ENCODE measurements at regions of chr1 and their contacts with region 1.

Region 1: DNA sequence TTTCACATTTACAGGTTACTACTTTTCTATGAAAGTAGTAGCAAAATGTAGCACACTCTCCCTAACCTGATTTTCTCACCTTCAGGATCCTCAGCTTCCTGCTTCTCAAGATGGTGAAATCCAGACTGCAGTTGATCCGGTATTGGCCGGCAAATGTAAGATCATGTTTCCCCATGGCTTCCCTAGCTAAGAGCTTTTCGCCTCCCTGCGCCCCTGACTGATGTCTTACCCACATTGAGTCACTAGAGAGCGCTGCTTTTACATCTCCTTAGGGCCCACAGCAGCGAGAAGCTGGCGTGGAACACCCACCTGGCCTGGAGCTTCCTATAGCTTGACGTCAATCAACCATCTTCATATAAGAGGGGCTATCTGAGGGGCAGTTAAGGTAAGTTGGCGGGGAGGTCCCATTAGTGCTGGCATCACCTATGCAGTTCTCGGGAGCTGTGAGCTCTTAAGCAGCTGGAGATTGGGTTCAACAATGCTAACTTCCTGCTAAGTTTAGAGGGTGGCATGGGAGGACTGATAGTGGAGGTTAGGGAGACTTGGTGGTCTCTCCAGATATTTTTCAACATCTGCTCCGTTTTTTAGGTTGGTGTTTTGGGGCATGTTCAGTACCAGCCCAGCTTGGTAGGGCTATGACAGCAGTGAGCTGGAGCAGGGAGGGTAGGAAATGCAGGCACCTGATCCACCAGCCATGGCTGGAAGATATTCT is 5.5 kb downstream of the PTPN7 start:
- DNase-seq: peak; percentile 74
- ATAC-seq: peak; percentile 54
- H3K4me3 Mint-ChIP-seq: peak overlapping the region; percentile 3
- H3K27ac Mint-ChIP-seq: peak overlapping the region; percentile 53
- H3K4me1 Mint-ChIP-seq: peaks cover 55% of the 10 kb centered on the region
- H3K27me3 Mint-ChIP-seq: no peaks in the 10 kb centered on the region

Region 2: GRCh38 chr1:202029171-202029665 is 125.7 kb before region 1 on chr1:
- CTCF ChIA-PET with region 1: no interaction called
- POLR2A ChIA-PET with region 1: no interaction called
- DNase-seq: no peak
- ATAC-seq: no peak
- H3K4me3 Mint-ChIP-seq: no peak overlapping the region
- H3K27ac Mint-ChIP-seq: no peak overlapping the region
- H3K4me1 Mint-ChIP-seq: no peaks in the 10 kb centered on the region
- H3K27me3 Mint-ChIP-seq: peaks cover 2% of the 10 kb centered on the region

Region 3: GRCh38 chr1:202135221-202135721 is 19.7 kb before region 1 on chr1:
- CTCF ChIA-PET with region 1: interaction called, 16 read pairs
- POLR2A ChIA-PET with region 1: interaction called, 4 read pairs
- DNase-seq: peak; percentile 67
- ATAC-seq: peak; percentile 77
- H3K4me3 Mint-ChIP-seq: no peak overlapping the region
- H3K27ac Mint-ChIP-seq: no peak overlapping the region
- H3K4me1 Mint-ChIP-seq: peaks cover 12% of the 10 kb centered on the region
- H3K27me3 Mint-ChIP-seq: no peaks in the 10 kb centered on the region

Region 4: DNA sequence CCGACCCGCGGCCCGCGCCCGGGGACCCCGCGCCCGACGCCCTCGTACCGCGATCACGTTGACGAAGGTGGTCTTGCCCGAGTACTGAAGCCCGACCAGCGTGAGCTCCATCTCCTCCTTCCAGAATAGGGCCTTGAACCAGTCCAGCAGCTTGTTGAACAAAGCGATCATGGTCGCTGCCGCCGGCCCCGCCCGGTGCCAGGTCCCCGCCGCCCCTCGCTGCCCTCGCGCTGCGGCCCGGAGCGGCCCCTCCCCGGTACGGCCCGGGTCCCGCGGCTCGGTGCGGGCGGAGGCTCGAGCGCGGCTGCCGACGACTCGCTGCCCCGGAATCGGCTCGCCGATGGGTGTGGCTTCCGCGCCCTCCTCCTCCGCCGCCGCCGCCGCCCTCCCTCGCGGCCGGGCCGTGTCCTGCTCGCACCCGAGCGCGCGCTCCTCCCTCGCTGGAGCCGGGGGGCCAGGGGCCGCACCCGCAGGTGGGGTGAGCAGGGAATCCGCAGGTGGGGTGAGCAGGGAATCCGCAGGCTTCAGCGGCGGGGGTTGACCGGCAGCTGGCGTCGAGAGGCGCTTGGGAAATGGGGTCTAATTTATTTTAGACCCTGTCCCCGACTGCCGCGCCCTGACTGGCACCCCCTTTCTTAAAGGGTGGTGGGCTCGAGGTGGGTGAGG is 10.4 kb before region 1 on chr1 and contains the start of gene ARL8A:
- CTCF ChIA-PET with region 1: interaction called, 39 read pairs
- POLR2A ChIA-PET with region 1: interaction called, 103 read pairs
- DNase-seq: peak; percentile 74
- ATAC-seq: peak; percentile 85
- H3K4me3 Mint-ChIP-seq: peak within 1 kb of the TSS; percentile 98
- H3K27ac Mint-ChIP-seq: peak within 1 kb of the TSS; percentile 94
- H3K4me1 Mint-ChIP-seq: peaks cover 28% of the 10 kb centered on the region
- H3K27me3 Mint-ChIP-seq: no peaks in the 10 kb centered on the region
- total RNA-seq, gene ARL8A: 39.7 to 42.0 TPM

Region 5: DNA sequence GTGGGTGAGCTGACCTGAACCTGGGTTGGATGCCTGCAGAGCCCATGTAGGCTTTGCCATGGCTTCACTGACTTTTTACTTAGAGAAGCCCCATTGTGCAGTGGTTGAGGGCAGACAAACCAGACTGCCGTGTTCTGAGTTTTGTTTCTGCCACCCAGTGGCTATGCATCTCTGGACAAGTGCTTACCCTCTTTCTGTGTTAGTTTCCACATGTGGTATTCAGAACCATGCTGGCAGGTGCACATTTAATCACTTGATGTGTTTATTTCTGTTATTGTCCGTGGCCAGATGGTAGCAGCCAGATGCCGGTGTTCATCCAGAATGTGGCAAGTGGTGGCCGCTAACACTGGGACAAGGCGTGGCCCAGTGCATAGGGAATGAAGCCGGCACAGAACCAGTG is 15.8 kb after region 1 on chr1:
- CTCF ChIA-PET with region 1: interaction called, 31 read pairs
- POLR2A ChIA-PET with region 1: interaction called, 15 read pairs
- DNase-seq: peak; percentile 43
- ATAC-seq: peak; percentile 49
- H3K4me3 Mint-ChIP-seq: no peak overlapping the region
- H3K27ac Mint-ChIP-seq: no peak overlapping the region
- H3K4me1 Mint-ChIP-seq: peaks cover 23% of the 10 kb centered on the region
- H3K27me3 Mint-ChIP-seq: no peaks in the 10 kb centered on the region

Region 6: GRCh38 chr1:202184750-202185460 is 30.0 kb after region 1 on chr1:
- CTCF ChIA-PET with region 1: interaction called, 29 read pairs
- POLR2A ChIA-PET with region 1: interaction called, 4 read pairs
- DNase-seq: peak; percentile 73
- ATAC-seq: peak; percentile 66
- H3K4me3 Mint-ChIP-seq: no peak overlapping the region
- H3K27ac Mint-ChIP-seq: no peak overlapping the region
- H3K4me1 Mint-ChIP-seq: peaks cover 25% of the 10 kb centered on the region
- H3K27me3 Mint-ChIP-seq: no peaks in the 10 kb centered on the region

Region 7: GRCh38 chr1:202315576-202316168 is 160.8 kb after region 1 on chr1:
- CTCF ChIA-PET with region 1: interaction called, 14 read pairs
- POLR2A ChIA-PET with region 1: no interaction called
- DNase-seq: peak; percentile 85
- ATAC-seq: peak; percentile 89
- H3K4me3 Mint-ChIP-seq: no peak overlapping the region
- H3K27ac Mint-ChIP-seq: no peak overlapping the region
- H3K4me1 Mint-ChIP-seq: peaks cover 14% of the 10 kb centered on the region
- H3K27me3 Mint-ChIP-seq: peaks cover 21% of the 10 kb centered on the region